ENCODE measurements at regions of chr15 and their contacts with region 1.

Region 1: GRCh38 chr15:78034495-78035191 is 42.9 kb downstream of the TBC1D2B start:
- DNase-seq: peak; percentile 86
- H3K4me3 Mint-ChIP-seq: peak overlapping the region; percentile 44
- H3K27ac Mint-ChIP-seq: peak overlapping the region; percentile 82
- H3K4me1 Mint-ChIP-seq: peaks cover 80% of the 10 kb centered on the region
- H3K27me3 Mint-ChIP-seq: no peaks in the 10 kb centered on the region

Region 2: DNA sequence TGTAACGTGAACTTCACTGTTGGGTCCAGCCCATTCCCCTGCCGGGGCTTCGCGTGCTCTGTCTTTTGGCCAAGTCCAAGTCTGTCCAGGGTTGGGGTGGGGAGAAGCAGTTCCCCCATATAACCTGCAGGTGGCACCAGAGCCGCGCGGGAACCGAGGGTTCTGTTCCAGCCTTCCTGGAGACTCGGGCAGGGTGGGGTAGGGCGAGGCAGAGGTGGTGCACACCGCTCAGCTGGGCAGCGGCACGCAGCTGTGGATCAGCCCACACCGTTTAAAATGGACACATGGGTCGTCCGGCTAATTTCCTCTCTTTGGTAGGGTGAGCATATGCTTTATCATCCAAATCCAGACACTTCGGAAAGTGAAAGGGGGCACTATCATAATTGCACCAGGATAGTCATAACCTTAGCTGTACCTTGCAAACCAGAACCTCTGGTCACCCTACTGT is 75.2 kb before region 1 on chr15:
- CTCF ChIA-PET with region 1: interaction called, 10 read pairs
- DNase-seq: peak; percentile 83
- H3K4me3 Mint-ChIP-seq: no peak overlapping the region
- H3K27ac Mint-ChIP-seq: no peak overlapping the region
- H3K4me1 Mint-ChIP-seq: peaks cover 17% of the 10 kb centered on the region
- H3K27me3 Mint-ChIP-seq: peaks cover 54% of the 10 kb centered on the region

Region 3: GRCh38 chr15:78049691-78050440 is 15.2 kb after region 1 on chr15:
- CTCF ChIA-PET with region 1: interaction called, 15 read pairs
- DNase-seq: peak; percentile 71
- H3K4me3 Mint-ChIP-seq: peak overlapping the region; percentile 18
- H3K27ac Mint-ChIP-seq: peak overlapping the region; percentile 93
- H3K4me1 Mint-ChIP-seq: peaks cover 91% of the 10 kb centered on the region
- H3K27me3 Mint-ChIP-seq: no peaks in the 10 kb centered on the region

Region 4: GRCh38 chr15:78067328-78068228 is 32.9 kb after region 1 on chr15:
- CTCF ChIA-PET with region 1: interaction called, 15 read pairs
- DNase-seq: no peak
- H3K4me3 Mint-ChIP-seq: peak overlapping the region; percentile 59
- H3K27ac Mint-ChIP-seq: peak overlapping the region; percentile 93
- H3K4me1 Mint-ChIP-seq: peaks cover 16% of the 10 kb centered on the region
- H3K27me3 Mint-ChIP-seq: no peaks in the 10 kb centered on the region

Region 5: GRCh38 chr15:78149068-78149804 is 114.6 kb after region 1 on chr15 and contains the start of gene IDH3A:
- CTCF ChIA-PET with region 1: no interaction called
- DNase-seq: peak; percentile 100
- H3K4me3 Mint-ChIP-seq: peak within 1 kb of the TSS; percentile 90
- H3K27ac Mint-ChIP-seq: peak within 1 kb of the TSS; percentile 88
- H3K4me1 Mint-ChIP-seq: peaks cover 46% of the 10 kb centered on the region
- H3K27me3 Mint-ChIP-seq: no peaks in the 10 kb centered on the region